ENCODE measurements at regions of chr15 and their contacts with region 1.

Region 1: DNA sequence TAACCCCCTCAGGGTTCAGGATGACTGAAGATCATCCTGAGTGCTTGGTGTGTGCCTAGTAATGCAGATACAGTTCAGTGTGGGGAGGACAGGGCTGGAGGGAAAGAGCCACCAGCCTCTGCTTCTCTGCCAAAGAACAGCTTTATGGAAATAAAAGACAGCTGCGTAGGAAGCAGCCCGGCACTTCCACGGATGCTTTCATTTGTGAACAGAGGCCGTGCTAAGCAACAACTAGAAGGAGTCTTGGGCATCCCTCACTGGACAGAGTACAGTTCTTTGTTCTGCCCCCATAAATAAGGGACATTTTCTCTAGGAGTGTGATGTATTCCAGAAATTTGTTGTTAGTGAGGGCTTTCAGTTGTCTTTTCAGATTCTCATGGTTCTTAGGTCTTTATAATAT is 194.8 kb upstream of the RGMA start:
- DNase-seq: no peak
- H3K4me3 ChIP-seq: no peak overlapping the region
- H3K27ac ChIP-seq: no peak overlapping the region
- H3K4me1 ChIP-seq: no peaks in the 10 kb centered on the region
- H3K27me3 ChIP-seq: no peaks in the 10 kb centered on the region
- CTCF ChIP-seq: no peak
- POLR2A ChIP-seq: no peak

Region 2: GRCh38 chr15:92599394-92599970 is 684.4 kb before region 1 on chr15:
- intact Hi-C with region 1: no loop called
- DNase-seq: no peak
- H3K4me3 ChIP-seq: no peak overlapping the region
- H3K27ac ChIP-seq: no peak overlapping the region
- H3K4me1 ChIP-seq: no peaks in the 10 kb centered on the region
- H3K27me3 ChIP-seq: no peaks in the 10 kb centered on the region
- CTCF ChIP-seq: no peak
- POLR2A ChIP-seq: no peak

Region 3: GRCh38 chr15:93265111-93265556 is 18.7 kb before region 1 on chr15:
- intact Hi-C with region 1: no loop called
- DNase-seq: no peak
- H3K4me3 ChIP-seq: no peak overlapping the region
- H3K27ac ChIP-seq: no peak overlapping the region
- H3K4me1 ChIP-seq: no peaks in the 10 kb centered on the region
- H3K27me3 ChIP-seq: no peaks in the 10 kb centered on the region
- CTCF ChIP-seq: no peak
- POLR2A ChIP-seq: no peak

Region 4: DNA sequence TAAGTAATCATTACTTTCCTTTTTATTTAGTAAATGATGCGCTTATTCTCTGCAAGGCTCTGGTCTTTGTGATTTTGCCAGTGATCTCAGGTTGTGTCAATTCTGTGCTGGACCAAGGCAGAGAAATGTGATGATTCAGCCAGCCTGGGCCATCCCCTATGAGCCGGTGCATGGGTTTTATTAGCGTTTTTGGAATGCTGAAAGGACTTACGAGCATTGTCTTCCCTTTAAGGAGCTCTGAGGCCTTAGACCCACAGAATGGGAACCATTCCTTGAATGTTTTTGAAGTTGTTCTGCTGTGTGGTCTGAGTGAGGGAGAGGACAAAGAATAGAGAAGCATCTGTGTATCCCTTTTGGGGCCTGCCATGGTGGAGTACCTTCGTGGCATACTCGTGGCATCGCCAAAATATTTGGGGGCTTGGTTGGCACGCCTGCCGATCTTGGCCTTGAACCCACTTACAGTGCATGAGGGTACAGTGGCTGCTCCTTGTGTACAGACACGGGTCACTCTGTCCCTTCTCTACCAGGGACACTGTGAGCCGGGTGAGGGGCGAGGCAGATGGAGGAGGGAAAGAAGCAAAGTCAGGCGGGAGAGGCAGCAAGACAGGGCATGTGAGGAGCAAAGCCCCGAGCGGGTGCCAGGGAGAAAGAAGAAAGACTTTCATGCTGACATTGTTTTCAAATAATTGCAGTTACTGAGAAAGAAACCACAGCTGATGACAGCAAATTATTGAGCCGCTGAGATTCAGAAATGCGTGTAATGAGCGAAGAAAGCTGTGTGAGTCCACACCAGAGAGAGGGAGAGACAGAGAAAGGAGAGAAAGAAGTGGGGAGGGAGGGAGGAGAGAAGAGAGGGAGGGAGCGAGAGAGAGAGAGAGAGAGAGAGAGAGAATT is 74.6 kb after region 1 on chr15:
- intact Hi-C with region 1: loop called (anchors 2 kb)
- DNase-seq: no peak
- H3K4me3 ChIP-seq: no peak overlapping the region
- H3K27ac ChIP-seq: peak overlapping the region in 1 of 2 donors; percentile 59
- H3K4me1 ChIP-seq: no peaks in the 10 kb centered on the region
- H3K27me3 ChIP-seq: no peaks in the 10 kb centered on the region
- CTCF ChIP-seq: no peak
- POLR2A ChIP-seq: no peak